ENCODE measurements at regions of chr11 and their contacts with region 1.

Region 1: DNA sequence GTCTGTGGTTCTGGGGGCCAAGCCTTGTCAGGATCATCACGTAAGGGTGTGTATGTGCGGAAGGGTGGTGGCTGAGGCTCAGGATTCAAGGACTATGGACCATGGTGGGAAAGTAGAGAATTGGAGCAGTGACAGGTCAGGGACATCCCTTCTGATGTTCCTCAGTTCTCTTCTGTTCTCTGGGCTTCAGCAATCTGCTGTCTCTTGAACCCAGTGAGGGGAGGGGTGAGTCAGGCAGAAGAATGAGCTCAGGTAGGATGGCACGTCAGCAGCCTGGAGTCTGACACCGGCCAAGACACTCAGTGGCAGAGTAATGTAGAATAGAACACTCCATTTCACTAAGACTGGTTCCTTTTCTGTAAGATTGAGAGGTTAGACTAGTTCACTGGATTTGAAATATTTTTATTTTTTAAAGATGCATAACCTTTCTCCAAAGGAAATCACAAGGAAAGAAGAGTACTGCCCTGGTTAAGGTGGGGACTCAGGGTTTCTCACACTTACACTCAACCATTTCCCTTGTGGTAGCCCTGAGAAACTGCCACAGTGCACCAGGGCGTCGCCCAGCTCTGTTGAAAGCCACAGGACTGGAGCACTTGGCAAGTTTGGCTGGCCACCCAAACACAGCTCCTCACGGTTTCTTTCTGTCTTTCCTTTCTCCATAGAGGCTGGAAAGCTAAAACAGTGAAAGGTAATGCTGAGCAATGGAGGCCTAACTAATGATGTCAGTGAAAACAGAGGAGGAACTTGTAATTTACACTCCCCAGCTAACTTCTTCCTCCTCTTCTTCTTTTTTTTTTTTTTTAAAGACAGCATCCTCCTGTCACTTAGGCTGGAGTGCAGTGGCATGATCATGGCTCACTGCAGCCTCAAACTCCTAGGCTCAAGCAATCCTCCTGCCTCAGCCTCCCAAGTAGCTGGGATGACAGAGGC is 23.1 kb upstream of the MICAL2 start:
- DNase-seq: peak; percentile 16 to 72 (median 44)
- H3K4me3 ChIP-seq: peak overlapping the region; percentile 19
- H3K4me3 Mint-ChIP-seq: peak overlapping the region; percentile 48 to 92 (median 78)
- H3K27ac ChIP-seq: no peak overlapping the region
- H3K27ac Mint-ChIP-seq: peak overlapping the region; percentile 66 to 94 (median 90)
- H3K4me1 ChIP-seq: peaks cover 66% of the 10 kb centered on the region
- H3K4me1 Mint-ChIP-seq: peaks cover 74 to 81% (median 80%) of the 10 kb centered on the region in 3 donors
- H3K27me3 ChIP-seq: no peaks in the 10 kb centered on the region
- H3K27me3 Mint-ChIP-seq: no peaks in the 10 kb centered on the region

Region 2: DNA sequence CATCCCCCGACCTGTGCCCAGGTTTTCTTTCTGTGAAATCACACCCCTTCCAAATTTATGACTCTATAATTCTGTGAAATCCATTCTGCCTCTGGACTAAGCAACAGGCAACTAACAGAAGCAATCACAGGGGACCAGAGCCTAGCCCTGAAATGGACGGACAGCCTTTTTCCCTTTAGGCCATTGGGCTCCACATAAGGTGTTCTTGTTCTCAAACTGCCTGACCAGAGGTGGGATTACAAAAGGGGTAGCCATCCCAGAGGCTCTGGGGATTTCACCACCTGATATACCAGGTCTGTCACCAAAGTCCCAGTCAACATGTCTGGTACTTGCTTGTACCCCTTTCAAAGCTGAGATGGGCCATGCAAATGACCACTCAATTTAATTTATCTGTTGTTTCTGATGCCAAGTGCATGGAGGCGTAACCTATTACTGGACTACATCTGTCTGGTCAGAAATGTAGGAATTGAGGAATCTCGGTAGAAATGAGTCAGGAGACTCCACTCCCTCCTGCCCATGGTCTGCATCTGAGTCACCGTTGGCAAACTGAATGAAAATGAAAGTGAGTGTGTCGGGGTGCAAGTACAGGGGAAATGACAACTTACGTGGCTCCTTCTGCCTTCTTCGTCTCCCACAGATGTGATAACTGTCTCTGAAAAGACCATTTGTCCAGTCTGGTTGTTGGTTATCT is 89.1 kb before region 1 on chr11:
- CTCF ChIA-PET with region 1: no interaction called
- POLR2A ChIA-PET with region 1: no interaction called
- DNase-seq: no peak
- H3K4me3 ChIP-seq: no peak overlapping the region
- H3K4me3 Mint-ChIP-seq: peak overlapping the region in 6 of 7 donors; percentile 68 to 81 (median 77)
- H3K27ac ChIP-seq: no peak overlapping the region
- H3K27ac Mint-ChIP-seq: peak overlapping the region; percentile 59 to 97 (median 76)
- H3K4me1 ChIP-seq: peaks cover 15% of the 10 kb centered on the region
- H3K4me1 Mint-ChIP-seq: peaks cover 29 to 59% (median 33%) of the 10 kb centered on the region in 3 donors
- H3K27me3 ChIP-seq: peaks cover 8% of the 10 kb centered on the region
- H3K27me3 Mint-ChIP-seq: peaks cover 2 to 24% of the 10 kb centered on the region in 2 donors

Region 3: DNA sequence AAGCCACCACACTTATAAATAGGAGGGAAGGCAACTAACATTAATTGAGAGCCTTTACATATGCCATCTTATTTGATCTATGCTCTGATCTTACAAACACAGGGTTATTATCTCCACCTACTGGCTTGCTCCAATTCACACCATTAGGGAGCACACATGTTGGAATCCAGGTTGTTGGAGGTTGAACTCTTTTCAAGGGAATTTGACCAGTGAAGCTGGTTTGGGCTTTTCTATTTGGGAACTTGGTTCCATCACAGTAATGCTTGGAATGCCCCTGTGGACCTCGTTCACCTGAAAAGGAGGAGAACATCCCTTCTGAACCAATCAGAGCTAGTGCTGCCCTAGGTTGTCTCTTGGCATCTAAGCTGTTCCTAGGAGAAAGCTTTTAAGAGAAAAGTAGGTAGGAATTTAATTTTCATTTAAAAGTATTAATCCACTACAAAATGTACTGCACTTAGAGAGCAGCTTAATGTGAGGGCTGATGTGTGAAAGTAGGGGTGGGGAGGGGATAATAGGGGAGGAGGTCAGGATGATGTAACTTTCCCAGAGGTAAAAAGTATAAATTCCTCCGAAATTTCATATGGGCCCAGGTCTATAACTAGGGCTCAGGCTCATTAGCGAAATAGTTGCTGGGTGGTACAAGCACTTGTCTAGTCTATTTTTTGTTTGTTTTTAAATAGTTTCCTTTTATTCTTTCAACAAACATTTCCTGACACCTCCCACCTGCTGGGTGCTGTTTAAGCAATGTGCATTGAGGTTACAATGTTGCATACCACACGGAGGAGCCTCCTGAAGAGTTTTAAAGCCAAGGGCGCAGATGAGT is 15.5 kb after region 1 on chr11:
- CTCF ChIA-PET with region 1: interaction called, 12 read pairs
- POLR2A ChIA-PET with region 1: no interaction called
- DNase-seq: no peak
- H3K4me3 ChIP-seq: no peak overlapping the region
- H3K4me3 Mint-ChIP-seq: peak overlapping the region in 2 of 7 donors; percentile 24 to 44
- H3K27ac ChIP-seq: no peak overlapping the region
- H3K27ac Mint-ChIP-seq: peak overlapping the region in 4 of 8 donors; percentile 10 to 91 (median 50)
- H3K4me1 ChIP-seq: no peaks in the 10 kb centered on the region
- H3K4me1 Mint-ChIP-seq: peaks cover 20 to 37% (median 29%) of the 10 kb centered on the region in 3 donors
- H3K27me3 ChIP-seq: no peaks in the 10 kb centered on the region
- H3K27me3 Mint-ChIP-seq: peaks cover 2 to 3% of the 10 kb centered on the region in 2 donors

Region 4: DNA sequence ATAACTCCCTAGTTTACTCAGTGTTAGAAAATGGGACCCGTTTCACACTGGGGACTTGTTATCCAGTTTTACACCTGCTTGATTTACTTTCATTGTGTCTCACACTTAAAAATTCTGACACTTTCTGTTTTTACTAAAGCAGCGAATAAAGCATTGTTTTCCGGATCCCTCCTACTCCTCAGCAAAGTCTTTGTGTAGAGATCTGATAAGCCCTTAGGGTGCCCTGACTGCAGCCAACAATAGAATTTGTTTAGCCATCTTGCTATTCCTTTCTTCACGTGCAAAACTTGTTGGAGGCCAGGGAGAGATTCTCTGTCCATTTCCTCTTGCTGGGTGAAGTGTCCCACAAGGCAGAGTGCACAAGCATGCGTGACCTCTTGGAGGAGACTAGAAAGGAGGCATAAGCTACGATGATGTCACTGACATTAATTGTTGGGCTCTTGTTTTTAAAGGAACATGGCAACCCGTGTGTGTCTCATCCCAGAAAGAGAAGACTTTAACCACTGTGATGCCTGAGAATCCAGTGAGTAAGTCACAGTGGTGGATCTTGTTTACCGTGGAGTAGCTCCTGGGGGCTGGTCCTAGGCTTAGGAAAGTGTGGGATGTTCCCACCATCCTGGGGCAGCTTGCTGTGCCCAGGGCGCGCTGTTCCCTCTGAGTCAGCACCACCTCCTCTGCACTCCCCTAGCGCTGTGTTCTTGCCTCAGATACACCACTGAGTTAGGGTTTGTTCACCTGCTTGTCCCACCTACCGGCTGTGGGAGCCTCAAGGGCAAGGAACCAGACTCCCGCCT is 50.8 kb after region 1 on chr11:
- CTCF ChIA-PET with region 1: no interaction called
- POLR2A ChIA-PET with region 1: no interaction called
- DNase-seq: no peak
- H3K4me3 ChIP-seq: no peak overlapping the region
- H3K4me3 Mint-ChIP-seq: peak overlapping the region in 1 of 7 donors; percentile 4
- H3K27ac ChIP-seq: no peak overlapping the region
- H3K27ac Mint-ChIP-seq: peak overlapping the region in 2 of 8 donors; percentile 68 to 76
- H3K4me1 ChIP-seq: peaks cover 36% of the 10 kb centered on the region
- H3K4me1 Mint-ChIP-seq: peaks cover 31 to 67% (median 34%) of the 10 kb centered on the region in 3 donors
- H3K27me3 ChIP-seq: no peaks in the 10 kb centered on the region
- H3K27me3 Mint-ChIP-seq: no peaks in the 10 kb centered on the region

Measured in CD8-positive, alpha-beta memory T cell (primary cell).